ENCODE measurements at regions of chr7 and their contacts with region 1.

Region 1: GRCh38 chr7:23298885-23299769 is at the start of gene MALSU1:
- DNase-seq: peak; percentile 96 to 100
- ATAC-seq: peak; percentile 99 to 100 (median 99)
- H3K4me3 ChIP-seq: peak within 1 kb of the TSS; percentile 94
- H3K4me3 Mint-ChIP-seq: peak within 1 kb of the TSS; percentile 84
- H3K27ac ChIP-seq: peak within 1 kb of the TSS; percentile 83
- H3K27ac Mint-ChIP-seq: peak within 1 kb of the TSS; percentile 89 to 95
- H3K4me1 ChIP-seq: peaks cover 17% of the 10 kb centered on the region
- H3K4me1 Mint-ChIP-seq: peaks cover 38 to 44% of the 10 kb centered on the region in 2 donors
- H3K27me3 ChIP-seq: no peaks in the 10 kb centered on the region
- H3K27me3 Mint-ChIP-seq: peaks cover 0 to 7% of the 10 kb centered on the region in 2 donors
- CTCF ChIP-seq: no peak
- total RNA-seq, gene MALSU1: 23.4 to 31.8 (median 26.3) TPM

Region 2: DNA sequence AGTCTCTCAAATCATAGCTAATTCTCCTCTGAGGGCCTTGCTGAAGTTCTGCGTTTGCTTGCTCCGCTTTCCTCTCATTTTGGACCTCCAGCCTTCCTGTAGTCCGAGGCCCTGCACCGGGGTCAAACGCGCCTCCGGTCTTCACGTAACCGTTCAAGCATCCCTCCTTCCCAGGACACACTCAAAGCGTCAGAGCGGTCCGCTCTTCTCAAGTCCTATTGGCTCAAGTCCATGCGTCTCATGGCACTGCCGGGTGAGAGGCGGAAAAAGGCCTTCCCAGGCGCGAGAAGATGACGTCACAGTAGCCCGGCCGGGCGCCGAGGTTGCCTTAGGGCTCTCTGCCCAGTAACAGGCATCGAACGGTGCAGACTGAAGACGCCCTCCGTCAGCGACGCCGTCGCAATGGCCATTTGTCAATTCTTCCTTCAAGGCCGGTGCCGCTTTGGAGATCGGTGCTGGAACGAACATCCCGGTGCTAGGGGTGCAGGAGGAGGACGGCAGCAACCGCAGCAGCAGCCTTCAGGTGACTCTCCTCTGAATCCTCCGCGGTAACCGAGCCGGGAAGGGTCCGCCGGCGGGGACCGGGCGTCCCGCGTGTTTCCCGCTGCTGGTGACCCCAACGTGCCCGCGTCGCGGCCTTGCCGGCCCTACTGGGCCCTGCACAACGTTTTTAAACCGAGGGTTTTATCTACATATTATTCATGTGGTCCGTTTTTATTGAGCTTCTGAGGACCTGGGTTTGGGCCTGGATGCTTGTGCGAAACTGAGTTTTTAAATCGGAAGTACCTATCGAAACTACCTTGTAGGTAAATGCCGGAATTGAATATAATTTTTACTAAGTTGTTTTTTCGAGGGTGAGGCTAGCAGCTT is 117.2 kb before region 1 on chr7 and contains the start of gene NUP42:
- intact Hi-C with region 1: loop called (anchors 1 kb)
- DNase-seq: peak; percentile 94 to 98
- ATAC-seq: peak; percentile 90 to 98 (median 93)
- H3K4me3 ChIP-seq: peak within 1 kb of the TSS; percentile 87
- H3K4me3 Mint-ChIP-seq: peak within 1 kb of the TSS; percentile 96
- H3K27ac ChIP-seq: peak within 1 kb of the TSS; percentile 93
- H3K27ac Mint-ChIP-seq: peak within 1 kb of the TSS; percentile 99
- H3K4me1 ChIP-seq: peaks cover 18% of the 10 kb centered on the region
- H3K4me1 Mint-ChIP-seq: peaks cover 23 to 29% of the 10 kb centered on the region in 2 donors
- H3K27me3 ChIP-seq: no peaks in the 10 kb centered on the region
- H3K27me3 Mint-ChIP-seq: peaks cover 0 to 3% of the 10 kb centered on the region in 2 donors
- CTCF ChIP-seq: no peak
- total RNA-seq, gene NUP42: 37.5 to 41.6 (median 40.2) TPM

Region 3: DNA sequence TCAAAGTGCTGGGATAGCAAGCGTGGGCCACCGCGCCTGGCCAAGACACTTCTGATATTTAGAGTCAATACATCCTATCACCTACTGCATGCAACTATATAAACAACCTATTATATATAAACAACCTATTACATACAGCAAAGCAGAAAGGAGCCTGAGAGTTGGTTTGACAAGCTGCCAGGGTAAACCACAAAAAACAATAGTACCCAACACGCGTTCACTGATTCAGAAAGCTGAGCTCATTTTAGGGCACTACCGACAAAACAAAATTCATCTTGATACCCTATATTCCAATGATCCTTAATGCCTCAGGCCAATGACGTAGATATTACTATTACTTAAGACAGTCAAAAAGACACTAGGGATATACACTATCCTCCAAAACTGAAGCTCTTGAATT is 16.2 kb after region 1 on chr7:
- intact Hi-C with region 1: no loop called
- DNase-seq: no peak
- ATAC-seq: no peak
- H3K4me3 ChIP-seq: no peak overlapping the region
- H3K4me3 Mint-ChIP-seq: no peak overlapping the region
- H3K27ac ChIP-seq: no peak overlapping the region
- H3K27ac Mint-ChIP-seq: no peak overlapping the region
- H3K4me1 ChIP-seq: no peaks in the 10 kb centered on the region
- H3K4me1 Mint-ChIP-seq: no peaks in the 10 kb centered on the region
- H3K27me3 ChIP-seq: peaks cover 2% of the 10 kb centered on the region
- H3K27me3 Mint-ChIP-seq: peaks cover 0 to 11% of the 10 kb centered on the region in 2 donors
- CTCF ChIP-seq: no peak

Region 4: DNA sequence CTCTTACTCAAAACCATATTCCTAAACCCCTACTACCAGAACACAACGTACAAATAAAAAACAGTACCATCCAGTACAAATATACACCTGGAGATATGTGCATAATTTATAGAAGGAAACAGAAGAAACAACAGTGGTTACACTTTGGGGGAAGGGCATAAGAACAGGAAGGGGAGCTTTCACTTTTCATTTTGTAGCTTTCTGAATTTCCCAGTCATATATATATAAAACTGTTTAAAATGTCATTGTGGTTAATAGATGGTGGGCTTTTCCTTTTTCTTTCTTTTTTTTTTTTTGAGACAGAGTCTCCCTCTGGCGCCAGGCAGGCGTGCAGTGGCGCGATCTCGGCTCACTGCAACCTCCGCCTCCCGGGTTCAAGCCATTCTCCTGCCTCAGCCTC is 47.2 kb after region 1 on chr7:
- intact Hi-C with region 1: loop called (anchors 1 kb)
- DNase-seq: peak in 1 of 2 donors; percentile 61
- ATAC-seq: peak; percentile 68 to 91 (median 89)
- H3K4me3 ChIP-seq: peak overlapping the region; percentile 48
- H3K4me3 Mint-ChIP-seq: peak overlapping the region; percentile 89
- H3K27ac ChIP-seq: peak overlapping the region; percentile 44
- H3K27ac Mint-ChIP-seq: peak overlapping the region; percentile 84
- H3K4me1 ChIP-seq: peaks cover 6% of the 10 kb centered on the region
- H3K4me1 Mint-ChIP-seq: peaks cover 18 to 28% of the 10 kb centered on the region in 2 donors
- H3K27me3 ChIP-seq: no peaks in the 10 kb centered on the region
- H3K27me3 Mint-ChIP-seq: peaks cover 0 to 3% of the 10 kb centered on the region in 2 donors
- CTCF ChIP-seq: no peak

Region 5: GRCh38 chr7:23531794-23532489 is 232.8 kb after region 1 on chr7 and contains the start of gene TRA2A:
- intact Hi-C with region 1: loop called (anchors 1 kb)
- DNase-seq: peak; percentile 98
- ATAC-seq: peak; percentile 82 to 97 (median 90)
- H3K4me3 ChIP-seq: peak within 1 kb of the TSS; percentile 95
- H3K4me3 Mint-ChIP-seq: peak within 1 kb of the TSS; percentile 100
- H3K27ac ChIP-seq: peak within 1 kb of the TSS; percentile 99
- H3K27ac Mint-ChIP-seq: peak within 1 kb of the TSS; percentile 99 to 100
- H3K4me1 ChIP-seq: peaks cover 22% of the 10 kb centered on the region
- H3K4me1 Mint-ChIP-seq: peaks cover 46 to 52% of the 10 kb centered on the region in 2 donors
- H3K27me3 ChIP-seq: no peaks in the 10 kb centered on the region
- H3K27me3 Mint-ChIP-seq: no peaks in the 10 kb centered on the region
- CTCF ChIP-seq: no peak
- total RNA-seq, gene TRA2A: 269 to 385 (median 324) TPM

Measured in natural killer cell (primary cell).